MCF 10A (cell line): ENCODE measurements at regions of chr1 and their contacts with region 1.

Region 1: GRCh38 chr1:150548632-150549495 is at the start of gene ADAMTSL4:
- DNase-seq: peak; percentile 80
- H3K4me3 Mint-ChIP-seq: peak within 1 kb of the TSS; percentile 81
- H3K27ac Mint-ChIP-seq: peak within 1 kb of the TSS; percentile 78
- H3K4me1 Mint-ChIP-seq: peaks cover 28% of the 10 kb centered on the region
- H3K27me3 Mint-ChIP-seq: no peaks in the 10 kb centered on the region
- CTCF ChIP-seq: peak; percentile 15
- total RNA-seq, gene ADAMTSL4: 9.6 and 13.3 TPM in 2 replicates

Region 2: GRCh38 chr1:150486964-150487762 is 61.7 kb before region 1 on chr1 and contains the start of gene TARS2:
- CTCF ChIA-PET with region 1: interaction called, 3 read pairs
- POLR2A ChIA-PET with region 1: interaction called, 5 read pairs
- intact Hi-C with region 1: loop called (anchors 2 kb)
- DNase-seq: peak; percentile 100
- H3K4me3 Mint-ChIP-seq: peak within 1 kb of the TSS; percentile 99
- H3K27ac Mint-ChIP-seq: peak within 1 kb of the TSS; percentile 93
- H3K4me1 Mint-ChIP-seq: peaks cover 14% of the 10 kb centered on the region
- H3K27me3 Mint-ChIP-seq: no peaks in the 10 kb centered on the region
- CTCF ChIP-seq: no peak
- total RNA-seq, gene TARS2: 43.1 and 65.3 TPM in 2 replicates

Region 3: DNA sequence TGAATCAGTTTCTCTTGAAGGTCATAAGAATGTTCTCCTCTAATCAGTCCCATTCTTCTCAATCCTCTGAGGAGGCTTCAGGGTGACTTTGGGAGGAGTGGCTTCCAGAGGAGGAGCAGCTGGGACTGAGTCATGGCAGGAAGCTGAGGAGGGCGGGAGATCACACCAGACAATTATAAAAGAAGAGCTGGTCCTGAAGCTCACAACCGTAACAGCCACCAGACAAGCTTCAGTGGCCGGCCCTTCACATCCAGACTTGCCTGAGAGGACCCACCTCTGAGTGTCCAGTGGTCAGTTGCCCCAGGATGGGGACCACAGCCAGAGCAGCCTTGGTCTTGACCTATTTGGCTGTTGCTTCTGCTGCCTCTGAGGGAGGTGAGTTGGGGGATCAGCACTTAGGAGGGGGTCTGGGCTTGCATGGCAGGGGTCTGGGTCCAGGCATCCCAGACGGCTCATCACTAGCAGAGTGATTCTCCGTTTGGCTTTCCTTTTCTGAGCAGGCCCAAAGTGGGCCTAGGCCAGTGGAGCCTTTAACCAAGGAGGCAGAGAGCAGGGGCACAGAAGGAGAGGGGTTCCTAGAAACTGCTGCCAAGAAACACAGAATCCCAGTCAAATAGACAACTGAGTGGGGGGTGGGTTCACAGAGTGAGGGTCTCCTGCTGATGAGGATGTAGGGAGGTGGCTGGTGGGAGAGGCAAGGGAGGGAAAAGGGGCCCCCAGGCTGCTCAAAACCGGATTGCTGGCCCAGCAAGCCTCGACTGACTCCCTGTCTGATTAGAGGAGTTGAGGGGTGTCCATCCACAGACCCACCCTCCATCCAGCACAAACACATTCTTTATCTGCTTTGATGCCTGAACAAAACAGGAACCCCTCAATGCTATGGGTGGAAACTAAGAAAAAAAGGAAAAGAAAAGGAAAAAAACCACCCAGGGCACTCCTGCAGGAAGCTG is 40.7 kb before region 1 on chr1 and contains the start of gene ECM1:
- CTCF ChIA-PET with region 1: interaction called, 13 read pairs
- POLR2A ChIA-PET with region 1: interaction called, 3 read pairs
- intact Hi-C with region 1: no loop called
- DNase-seq: peak; percentile 81
- H3K4me3 Mint-ChIP-seq: peak within 1 kb of the TSS; percentile 13
- H3K27ac Mint-ChIP-seq: peak within 1 kb of the TSS; percentile 86
- H3K4me1 Mint-ChIP-seq: peaks cover 11% of the 10 kb centered on the region
- H3K27me3 Mint-ChIP-seq: no peaks in the 10 kb centered on the region
- CTCF ChIP-seq: no peak
- total RNA-seq, gene ECM1: 1.7 and 3.2 TPM in 2 replicates

Region 4: GRCh38 chr1:150515328-150516048 is 33.4 kb before region 1 on chr1 and contains the start of gene FALEC:
- CTCF ChIA-PET with region 1: interaction called, 3 read pairs
- POLR2A ChIA-PET with region 1: interaction called, 12 read pairs
- intact Hi-C with region 1: no loop called
- DNase-seq: peak; percentile 98
- H3K4me3 Mint-ChIP-seq: peak within 1 kb of the TSS; percentile 69
- H3K27ac Mint-ChIP-seq: peak within 1 kb of the TSS; percentile 36
- H3K4me1 Mint-ChIP-seq: peaks cover 10% of the 10 kb centered on the region
- H3K27me3 Mint-ChIP-seq: no peaks in the 10 kb centered on the region
- CTCF ChIP-seq: no peak
- total RNA-seq, gene FALEC: not detected in 2 replicates

Region 5: GRCh38 chr1:150979092-150980056 is 430.5 kb after region 1 on chr1:
- CTCF ChIA-PET with region 1: interaction called, 4 read pairs
- POLR2A ChIA-PET with region 1: no interaction called
- intact Hi-C with region 1: loop called (anchors 5 kb)
- DNase-seq: peak; percentile 95
- H3K4me3 Mint-ChIP-seq: no peak overlapping the region
- H3K27ac Mint-ChIP-seq: no peak overlapping the region
- H3K4me1 Mint-ChIP-seq: peaks cover 32% of the 10 kb centered on the region
- H3K27me3 Mint-ChIP-seq: no peaks in the 10 kb centered on the region
- CTCF ChIP-seq: peak; percentile 100